Activated naive CD4-positive, alpha-beta T cell treated with anti-CD3 and anti-CD28 coated beads for 36 hours (primary cell): ENCODE measurements at regions of chrX and their contacts with region 1.

Region 1: GRCh38 chrX:22063284-22063683 is 31.2 kb downstream of the PHEX start:
- DNase-seq: peak; percentile 32
- H3K4me3 Mint-ChIP-seq: no peak overlapping the region
- H3K27ac Mint-ChIP-seq: peak overlapping the region; percentile 60
- H3K4me1 Mint-ChIP-seq: peaks cover 77% of the 10 kb centered on the region
- H3K27me3 Mint-ChIP-seq: no peaks in the 10 kb centered on the region

Region 2: GRCh38 chrX:21926527-21927278 is 136.6 kb before region 1 on chrX:
- CTCF ChIA-PET with region 1: no interaction called
- intact Hi-C with region 1: loop called (anchors 2 kb)
- DNase-seq: peak; percentile 26
- H3K4me3 Mint-ChIP-seq: no peak overlapping the region
- H3K27ac Mint-ChIP-seq: peak overlapping the region; percentile 68
- H3K4me1 Mint-ChIP-seq: peaks cover 26% of the 10 kb centered on the region
- H3K27me3 Mint-ChIP-seq: no peaks in the 10 kb centered on the region

Region 3: DNA sequence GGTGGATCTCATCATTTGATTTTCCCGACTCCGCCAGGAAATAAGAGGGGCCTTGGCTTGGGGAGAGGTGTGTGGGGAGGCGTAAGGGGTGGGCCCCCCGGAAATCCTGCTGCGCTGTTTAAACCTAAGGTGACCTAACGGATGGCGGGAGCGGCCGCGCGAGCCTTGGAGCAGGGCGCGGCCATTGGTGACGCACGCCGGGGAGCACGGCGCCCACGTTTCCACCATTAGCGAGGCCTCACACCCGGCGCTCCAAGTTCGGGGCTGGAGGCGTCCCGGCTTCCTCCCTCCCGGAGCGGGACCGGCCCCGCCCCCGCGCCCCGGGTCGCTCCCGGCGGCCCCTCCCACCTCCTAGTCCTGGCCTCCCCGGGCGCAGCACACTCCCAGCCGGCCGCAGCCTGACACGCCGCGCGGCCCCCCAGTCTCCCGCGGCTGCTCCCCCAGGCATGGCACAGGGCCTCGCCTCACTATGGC is 122.9 kb before region 1 on chrX and contains the start of gene SMS:
- CTCF ChIA-PET with region 1: no interaction called
- intact Hi-C with region 1: loop called (anchors 2 kb)
- DNase-seq: peak; percentile 58
- H3K4me3 Mint-ChIP-seq: peak within 1 kb of the TSS; percentile 85
- H3K27ac Mint-ChIP-seq: peak within 1 kb of the TSS; percentile 90
- H3K4me1 Mint-ChIP-seq: peaks cover 28% of the 10 kb centered on the region
- H3K27me3 Mint-ChIP-seq: no peaks in the 10 kb centered on the region
- total RNA-seq, gene SMS: 148 to 156 TPM

Region 4: DNA sequence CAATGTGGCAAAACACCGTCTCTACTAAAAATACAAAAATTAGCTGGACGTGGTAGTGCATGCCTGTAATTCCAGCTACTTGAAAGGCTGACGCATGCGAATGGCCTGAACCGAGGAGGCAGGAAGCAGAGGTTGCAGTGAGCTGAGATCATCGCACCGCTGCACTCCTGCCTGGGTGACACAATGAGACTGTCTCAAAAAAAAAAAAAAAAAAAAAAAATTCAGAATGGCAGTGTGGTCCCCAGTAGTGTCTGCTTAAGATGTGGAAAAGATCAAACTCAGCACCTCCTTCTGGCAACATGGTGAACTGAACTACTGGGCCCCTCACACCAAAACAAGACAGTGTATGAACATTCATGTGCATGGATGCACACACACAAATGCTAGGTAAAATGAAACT is 90.6 kb before region 1 on chrX:
- CTCF ChIA-PET with region 1: no interaction called
- intact Hi-C with region 1: no loop called
- DNase-seq: peak; percentile 64
- H3K4me3 Mint-ChIP-seq: no peak overlapping the region
- H3K27ac Mint-ChIP-seq: peak overlapping the region; percentile 87
- H3K4me1 Mint-ChIP-seq: peaks cover 35% of the 10 kb centered on the region
- H3K27me3 Mint-ChIP-seq: no peaks in the 10 kb centered on the region

Region 5: DNA sequence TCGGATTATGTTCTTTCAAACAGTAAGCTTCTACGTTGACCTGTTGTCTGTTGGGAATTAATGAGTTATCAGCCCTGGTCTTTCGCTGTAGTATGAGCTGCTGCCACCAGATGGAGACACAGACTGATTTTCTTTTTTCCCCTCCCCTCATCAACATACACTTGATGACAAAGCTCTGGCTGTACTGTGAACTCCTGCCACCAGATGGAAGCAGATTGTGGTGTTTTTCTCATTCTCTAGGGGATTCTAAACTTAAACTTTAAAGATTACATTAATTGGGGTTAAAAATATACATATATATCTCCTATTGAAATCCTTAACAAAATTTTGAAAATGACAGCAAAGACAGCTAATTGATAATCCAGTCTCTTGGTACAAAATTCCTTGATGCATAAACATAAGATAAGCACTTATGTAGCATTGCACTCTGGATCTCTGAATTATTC is 77.9 kb before region 1 on chrX:
- CTCF ChIA-PET with region 1: interaction called, 4 read pairs
- intact Hi-C with region 1: loop called (anchors 2 kb)
- DNase-seq: peak; percentile 77
- H3K4me3 Mint-ChIP-seq: no peak overlapping the region
- H3K27ac Mint-ChIP-seq: peak overlapping the region; percentile 8
- H3K4me1 Mint-ChIP-seq: peaks cover 14% of the 10 kb centered on the region
- H3K27me3 Mint-ChIP-seq: no peaks in the 10 kb centered on the region

Region 6: GRCh38 chrX:21990832-21991231 is 72.5 kb before region 1 on chrX:
- CTCF ChIA-PET with region 1: interaction called, 4 read pairs
- intact Hi-C with region 1: loop called (anchors 2 kb)
- DNase-seq: no peak
- H3K4me3 Mint-ChIP-seq: no peak overlapping the region
- H3K27ac Mint-ChIP-seq: no peak overlapping the region
- H3K4me1 Mint-ChIP-seq: peaks cover 42% of the 10 kb centered on the region
- H3K27me3 Mint-ChIP-seq: no peaks in the 10 kb centered on the region

Region 7: DNA sequence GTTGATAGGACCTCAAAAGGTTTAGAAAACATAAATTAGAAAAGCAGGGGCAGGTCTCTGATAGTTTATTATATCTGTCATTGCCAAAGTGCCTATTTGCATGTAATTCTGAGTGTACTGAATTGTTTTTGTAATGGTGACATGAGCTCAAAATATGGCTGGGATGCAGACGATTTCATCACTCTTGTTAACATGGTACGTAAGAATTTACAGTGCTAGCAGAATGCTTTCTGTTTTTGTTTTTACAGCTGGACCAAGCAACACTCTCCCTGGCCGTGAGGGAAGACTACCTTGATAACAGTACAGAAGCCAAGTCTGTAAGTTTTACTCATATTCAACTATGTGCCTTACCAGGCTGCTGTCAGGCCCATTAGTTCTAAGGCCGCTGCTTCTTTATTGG is 26.9 kb after region 1 on chrX:
- CTCF ChIA-PET with region 1: no interaction called
- intact Hi-C with region 1: loop called (anchors 1 kb)
- DNase-seq: no peak
- H3K4me3 Mint-ChIP-seq: peak overlapping the region; percentile 66
- H3K27ac Mint-ChIP-seq: peak overlapping the region; percentile 66
- H3K4me1 Mint-ChIP-seq: peaks cover 22% of the 10 kb centered on the region
- H3K27me3 Mint-ChIP-seq: no peaks in the 10 kb centered on the region

Region 8: DNA sequence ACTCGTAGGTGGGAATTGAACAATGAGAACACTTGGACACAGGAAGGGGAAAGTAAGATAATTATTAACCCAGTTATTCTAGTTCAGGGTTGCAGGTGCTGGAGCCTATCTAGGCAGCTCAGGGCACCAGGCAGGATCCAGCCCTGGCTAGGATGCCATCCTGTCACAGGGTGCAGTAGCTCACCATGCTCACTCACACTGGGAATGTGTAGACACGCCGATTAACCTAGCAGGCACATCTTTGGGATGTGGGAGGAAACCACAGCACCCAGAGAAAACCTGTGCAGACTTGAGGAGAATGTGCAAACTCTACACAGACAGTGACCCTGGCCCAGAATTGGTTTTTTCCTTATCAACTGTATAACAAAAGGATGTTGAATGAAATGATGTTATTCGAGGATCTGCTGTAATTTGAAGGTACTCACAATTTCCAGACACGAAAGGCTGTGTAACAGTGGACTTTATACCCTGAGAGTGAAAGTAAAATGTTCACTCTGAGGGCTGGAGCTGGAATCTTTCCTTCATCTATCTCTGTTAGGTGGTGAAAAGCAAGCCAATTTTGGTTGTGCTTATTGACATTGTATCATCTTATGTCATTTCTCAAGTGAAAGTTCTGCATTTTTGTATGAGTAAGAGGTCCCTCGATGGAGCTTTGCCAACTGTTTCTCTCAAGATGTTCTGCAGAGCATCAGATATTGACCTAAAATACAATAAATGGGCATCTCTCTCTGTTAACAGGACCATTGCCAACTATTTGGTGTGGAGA is 47.6 kb after region 1 on chrX:
- CTCF ChIA-PET with region 1: no interaction called
- intact Hi-C with region 1: loop called (anchors 1 kb)
- DNase-seq: no peak
- H3K4me3 Mint-ChIP-seq: no peak overlapping the region
- H3K27ac Mint-ChIP-seq: no peak overlapping the region
- H3K4me1 Mint-ChIP-seq: peaks cover 2% of the 10 kb centered on the region
- H3K27me3 Mint-ChIP-seq: no peaks in the 10 kb centered on the region

Region 9: DNA sequence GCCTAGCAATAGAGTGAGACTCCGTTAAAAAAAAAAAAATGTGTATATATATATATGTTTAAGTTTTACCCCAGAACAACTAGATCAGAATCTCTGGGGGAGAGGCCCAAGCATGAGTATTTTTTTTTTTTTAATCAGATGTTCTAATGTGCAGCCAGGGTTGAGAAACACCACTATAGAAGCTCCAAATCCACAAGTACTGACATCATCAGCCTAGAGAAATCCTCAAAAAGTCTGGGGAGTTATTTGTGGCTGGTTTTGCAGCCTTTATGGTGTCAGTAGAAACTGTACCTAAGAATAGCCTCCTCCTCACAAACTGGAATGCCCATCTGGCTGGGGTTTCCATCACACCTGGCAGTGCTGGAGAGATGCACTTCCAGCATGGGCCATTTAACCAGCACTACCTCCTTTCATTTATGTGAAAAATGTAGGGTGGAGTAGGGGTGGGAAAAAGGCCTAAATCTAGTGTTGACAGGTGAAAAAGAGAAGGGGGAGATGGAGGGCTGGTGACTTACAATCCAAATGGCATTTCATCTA is 302.9 kb after region 1 on chrX:
- CTCF ChIA-PET with region 1: no interaction called
- intact Hi-C with region 1: no loop called
- DNase-seq: no peak
- H3K4me3 Mint-ChIP-seq: no peak overlapping the region
- H3K27ac Mint-ChIP-seq: no peak overlapping the region
- H3K4me1 Mint-ChIP-seq: no peaks in the 10 kb centered on the region
- H3K27me3 Mint-ChIP-seq: no peaks in the 10 kb centered on the region